ENCODE measurements at regions of chr4 and their contacts with region 1.

Region 1: DNA sequence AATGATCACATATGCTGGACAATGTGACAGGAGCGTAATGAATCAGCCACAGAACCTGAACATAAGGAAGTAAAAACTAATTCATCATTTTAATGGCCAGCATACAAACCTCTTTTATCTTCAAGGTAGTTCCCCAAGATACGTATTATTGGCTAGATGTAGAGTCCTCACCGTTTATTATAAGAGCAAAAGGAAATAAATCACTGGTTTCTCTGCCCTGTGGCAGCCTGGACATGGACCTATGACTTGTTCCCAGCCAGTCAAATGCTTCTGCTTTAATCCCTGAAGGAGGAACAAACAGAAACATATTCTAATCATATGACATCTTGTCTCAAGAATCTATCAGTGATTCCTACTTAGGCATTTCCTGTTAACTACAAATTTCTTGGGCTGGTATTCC is 86.8 kb upstream of the FAM241A start:
- DNase-seq: no peak

Region 2: GRCh38 chr4:111813555-111814140 is 244.8 kb before region 1 on chr4:
- intact Hi-C with region 1: no loop called
- DNase-seq: no peak

Region 3: DNA sequence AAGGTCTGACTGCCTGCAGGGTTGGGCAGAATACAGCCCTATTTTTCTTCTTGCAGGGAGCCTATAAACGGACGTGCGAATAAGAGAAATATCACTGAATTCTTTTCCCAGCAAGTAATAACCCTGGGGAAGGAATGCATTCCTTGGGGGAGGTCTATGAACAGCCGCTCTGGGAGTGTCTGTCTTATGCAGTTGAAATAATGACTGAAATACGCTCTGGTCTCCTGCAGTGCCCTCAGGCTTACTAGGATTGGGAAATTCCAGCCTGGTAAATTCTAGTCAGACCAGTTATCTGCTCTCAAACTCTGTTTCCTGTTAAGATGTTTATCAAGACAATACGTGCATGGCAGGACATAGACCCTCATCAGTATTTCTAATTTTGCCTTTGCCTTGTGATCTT is 14.7 kb after region 1 on chr4:
- intact Hi-C with region 1: loop called in 1 of 2 experiments (anchors 2 kb)
- DNase-seq: no peak

Region 4: DNA sequence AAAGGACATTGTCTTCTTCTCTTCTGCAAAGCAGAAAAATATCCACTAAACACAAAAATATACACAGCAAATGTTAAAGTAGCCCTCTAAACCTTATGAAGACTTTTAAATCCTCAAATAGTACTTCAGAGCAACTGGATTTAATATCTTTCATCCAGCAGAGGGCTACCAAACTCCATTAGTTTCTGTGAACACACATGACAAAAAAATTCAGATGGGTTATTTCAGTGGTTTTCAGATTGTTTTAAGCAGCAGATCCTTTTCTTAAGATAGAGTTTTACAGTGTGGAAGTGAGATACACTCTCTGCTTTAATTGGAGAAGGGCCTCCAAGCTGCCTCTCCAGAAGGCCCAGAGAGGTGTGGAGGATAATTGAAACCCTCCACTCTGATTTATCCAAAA is 1047.7 kb after region 1 on chr4:
- intact Hi-C with region 1: no loop called
- DNase-seq: no peak

Measured in posterior vena cava (tissue), 2 donors.